Esophagus squamous epithelium (tissue), 5 donors: ENCODE measurements at regions of chr4 and their contacts with region 1.

Region 1: DNA sequence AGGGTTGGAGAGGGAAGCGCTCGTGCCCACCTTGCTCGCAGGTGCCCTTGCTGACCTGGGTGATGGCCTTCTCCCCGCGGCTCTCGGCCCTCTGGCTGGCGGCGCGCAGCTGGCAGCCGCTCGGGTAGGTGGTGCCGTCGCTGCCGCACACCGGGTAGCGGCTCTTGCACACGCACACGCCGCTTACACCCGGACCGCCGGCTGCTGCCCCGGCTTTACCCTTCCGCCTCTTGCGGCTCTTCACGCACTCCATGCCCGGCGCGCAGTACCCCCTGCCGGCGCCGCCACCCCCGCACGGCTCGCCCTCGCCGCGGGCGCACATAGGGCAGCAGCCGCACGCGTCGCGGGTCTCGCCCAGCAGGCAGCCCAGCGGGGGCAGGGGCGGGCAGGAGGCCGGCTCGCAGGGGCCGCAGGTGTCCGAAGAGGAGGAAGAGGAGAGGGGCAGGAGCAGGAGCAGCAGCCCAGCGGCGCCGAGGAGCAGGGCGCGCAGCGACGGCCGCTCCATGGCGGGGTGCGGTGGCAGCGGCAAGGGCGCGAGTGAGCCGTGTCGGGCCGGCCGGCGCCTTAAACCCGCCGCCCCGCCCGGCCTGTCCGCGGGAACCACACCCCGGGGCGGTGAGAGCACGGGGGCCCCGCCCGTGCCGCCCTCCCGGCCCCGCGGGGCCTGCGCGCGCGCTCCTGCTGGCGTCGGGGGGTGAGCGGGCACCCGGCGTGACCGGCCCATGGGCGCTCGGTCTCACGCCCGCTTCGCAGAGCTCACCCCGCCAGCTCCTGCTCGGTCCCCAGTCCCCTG is at the start of gene IGFBP7:
- DNase-seq: no peak
- H3K4me3 ChIP-seq: peak within 1 kb of the TSS; percentile 58 to 85 (median 70)
- H3K27ac ChIP-seq: peak within 1 kb of the TSS; percentile 85 to 95 (median 89)
- H3K4me1 ChIP-seq: peaks cover 7 to 38% (median 11%) of the 10 kb centered on the region in 3 donors
- H3K27me3 ChIP-seq: peaks cover 0 to 71% (median 3%) of the 10 kb centered on the region in 4 donors
- CTCF ChIP-seq: peak in 3 of 6 experiments; percentile 5 to 12 (median 9)
- POLR2A ChIP-seq: peak in 2 of 4 donors; percentile 74 to 85
- total RNA-seq, gene IGFBP7: 26.4 to 135 (median 91.3) TPM

Region 2: GRCh38 chr4:56587091-56587490 is 523.0 kb before region 1 on chr4:
- intact Hi-C with region 1: no loop called
- DNase-seq: no peak
- H3K4me3 ChIP-seq: no peak overlapping the region
- H3K27ac ChIP-seq: no peak overlapping the region
- H3K4me1 ChIP-seq: no peaks in the 10 kb centered on the region
- H3K27me3 ChIP-seq: peaks cover 0 to under 1% (median 0%) of the 10 kb centered on the region in 4 donors
- CTCF ChIP-seq: no peak
- POLR2A ChIP-seq: no peak

Region 3: GRCh38 chr4:57043347-57044251 is 66.4 kb before region 1 on chr4:
- intact Hi-C with region 1: loop called (anchors 10 kb)
- DNase-seq: no peak
- H3K4me3 ChIP-seq: no peak overlapping the region
- H3K27ac ChIP-seq: peak overlapping the region in 3 of 4 donors; percentile 68 to 80 (median 71)
- H3K4me1 ChIP-seq: peaks cover 0 to 49% (median 14%) of the 10 kb centered on the region in 3 donors
- H3K27me3 ChIP-seq: no peaks in the 10 kb centered on the region
- CTCF ChIP-seq: no peak
- POLR2A ChIP-seq: no peak